B cell (primary cell): ENCODE measurements at regions of chr1 and their contacts with region 1.

Region 1: DNA sequence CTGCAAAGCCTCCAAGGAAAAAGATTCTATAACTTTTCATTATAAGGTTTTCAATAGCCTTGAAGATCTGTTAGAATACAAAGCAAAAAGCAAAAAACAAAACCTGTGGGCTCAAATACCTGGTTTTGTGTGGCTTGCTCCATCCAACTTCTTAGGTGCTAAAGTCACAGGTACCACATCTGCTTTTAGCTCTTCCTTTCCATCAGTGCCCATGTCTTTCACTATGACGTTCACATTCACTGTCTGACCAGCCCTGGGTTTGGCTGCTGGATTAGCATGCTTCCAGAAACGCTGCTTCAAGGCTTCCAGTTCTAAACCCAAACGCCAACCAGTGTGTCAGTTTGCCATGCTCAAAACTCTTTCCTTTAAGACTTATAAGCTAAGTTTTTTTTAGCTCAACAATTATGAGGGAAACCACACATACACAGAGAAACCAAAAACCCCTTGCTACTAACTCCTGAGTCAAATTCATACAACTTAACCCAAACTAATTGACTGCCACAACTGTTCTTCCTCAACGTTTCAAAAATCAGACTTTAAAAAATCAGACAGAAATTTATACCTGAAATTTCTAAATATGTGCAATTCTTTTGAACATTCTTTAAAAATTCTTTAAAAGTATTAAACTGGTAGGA is 16.0 kb downstream of the CLSPN start:
- DNase-seq: no peak
- ATAC-seq: no peak
- H3K4me3 ChIP-seq: no peak overlapping the region
- H3K4me3 Mint-ChIP-seq: no peak overlapping the region
- H3K27ac ChIP-seq: no peak overlapping the region
- H3K27ac Mint-ChIP-seq: no peak overlapping the region
- H3K4me1 ChIP-seq: no peaks in the 10 kb centered on the region
- H3K4me1 Mint-ChIP-seq: no peaks in the 10 kb centered on the region
- H3K27me3 ChIP-seq: no peaks in the 10 kb centered on the region
- H3K27me3 Mint-ChIP-seq: no peaks in the 10 kb centered on the region
- CTCF ChIP-seq: no peak

Region 2: GRCh38 chr1:35539073-35539823 is 214.5 kb before region 1 on chr1:
- CTCF ChIA-PET with region 1: no interaction called
- POLR2A ChIA-PET with region 1: interaction called, 14 read pairs
- intact Hi-C with region 1: no loop called
- DNase-seq: peak; percentile 15
- ATAC-seq: no peak
- H3K4me3 ChIP-seq: no peak overlapping the region
- H3K4me3 Mint-ChIP-seq: peak overlapping the region; percentile 66
- H3K27ac ChIP-seq: peak overlapping the region; percentile 35 to 66
- H3K27ac Mint-ChIP-seq: peak overlapping the region; percentile 78
- H3K4me1 ChIP-seq: peaks cover 14 to 18% of the 10 kb centered on the region in 2 donors
- H3K4me1 Mint-ChIP-seq: peaks cover 31% of the 10 kb centered on the region
- H3K27me3 ChIP-seq: no peaks in the 10 kb centered on the region
- H3K27me3 Mint-ChIP-seq: no peaks in the 10 kb centered on the region
- CTCF ChIP-seq: no peak